ENCODE measurements at regions of chr7 and their contacts with region 1.

Region 1: GRCh38 chr7:50418086-50418515 is 32.0 kb downstream of the FIGNL1 start:
- DNase-seq: peak; percentile 77
- ATAC-seq: peak; percentile 84

Region 2: GRCh38 chr7:50206453-50207250 is 211.4 kb before region 1 on chr7:
- intact Hi-C with region 1: loop called (anchors 10 kb)
- DNase-seq: no peak
- ATAC-seq: peak; percentile 9